Naive thymus-derived CD4-positive, alpha-beta T cell (primary cell): ENCODE measurements at regions of chr17 and their contacts with region 1.

Region 1: GRCh38 chr17:1516388-1517161 is at the start of gene INPP5K:
- DNase-seq: peak; percentile 92 to 99 (median 97)
- ATAC-seq: peak; percentile 98
- H3K4me3 ChIP-seq: peak within 1 kb of the TSS; percentile 84
- H3K4me3 Mint-ChIP-seq: peak within 1 kb of the TSS; percentile 78 to 93 (median 91)
- H3K27ac ChIP-seq: peak within 1 kb of the TSS; percentile 97
- H3K27ac Mint-ChIP-seq: peak within 1 kb of the TSS; percentile 68 to 97 (median 92)
- H3K4me1 ChIP-seq: peaks cover 9 to 14% of the 10 kb centered on the region in 2 donors
- H3K4me1 Mint-ChIP-seq: peaks cover 18 to 47% (median 29%) of the 10 kb centered on the region in 7 donors
- H3K27me3 ChIP-seq: no peaks in the 10 kb centered on the region
- H3K27me3 Mint-ChIP-seq: no peaks in the 10 kb centered on the region
- total RNA-seq, gene INPP5K: 50.5 to 184 (median 84.2) TPM

Region 2: DNA sequence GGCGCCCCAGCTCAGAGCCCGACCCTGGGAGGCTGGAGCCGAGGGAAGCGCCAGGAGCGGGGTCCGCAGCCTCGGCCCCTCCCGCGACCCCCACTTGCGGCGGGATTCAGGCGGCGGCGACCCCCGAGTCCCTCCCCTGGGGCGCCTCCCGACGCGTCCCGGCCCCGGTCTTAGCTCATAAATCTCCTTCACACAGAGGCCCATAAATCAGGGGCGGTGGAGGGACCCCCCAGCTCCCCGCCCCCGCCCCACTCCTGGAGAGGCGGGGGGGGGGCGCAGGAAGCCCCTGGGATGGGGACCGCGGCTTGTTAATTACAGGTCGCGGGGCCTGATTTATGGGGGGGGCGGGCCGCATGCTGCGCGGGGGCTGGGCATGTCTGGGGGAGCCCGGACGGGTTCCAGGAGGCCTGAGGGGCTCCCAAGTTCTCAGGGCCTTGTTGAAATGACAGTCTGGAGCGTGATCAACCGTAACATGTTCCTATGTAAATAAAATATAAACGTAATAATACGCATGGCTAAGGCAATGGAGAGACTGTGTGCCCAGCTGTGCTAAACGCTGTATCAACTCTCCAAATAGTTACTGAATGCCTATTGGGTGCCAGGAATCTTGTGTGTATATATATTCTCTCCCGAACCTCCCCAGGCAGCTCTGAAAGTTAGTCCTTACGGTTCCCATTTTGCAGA is 256.3 kb before region 1 on chr17:
- CTCF ChIA-PET with region 1: no interaction called
- POLR2A ChIA-PET with region 1: no interaction called
- intact Hi-C with region 1: loop called (anchors 1 kb)
- DNase-seq: no peak
- ATAC-seq: no peak
- H3K4me3 ChIP-seq: no peak overlapping the region
- H3K4me3 Mint-ChIP-seq: peak overlapping the region in 9 of 10 donors; percentile 11 to 81 (median 56)
- H3K27ac ChIP-seq: no peak overlapping the region
- H3K27ac Mint-ChIP-seq: no peak overlapping the region
- H3K4me1 ChIP-seq: peaks cover 11 to 14% of the 10 kb centered on the region in 2 donors
- H3K4me1 Mint-ChIP-seq: peaks cover 4 to 32% (median 22%) of the 10 kb centered on the region in 7 donors
- H3K27me3 ChIP-seq: peaks cover 3 to 10% of the 10 kb centered on the region in 2 donors
- H3K27me3 Mint-ChIP-seq: peaks cover 26 to 59% (median 29%) of the 10 kb centered on the region in 5 donors

Region 3: GRCh38 chr17:1365445-1366039 is 151.0 kb before region 1 on chr17:
- CTCF ChIA-PET with region 1: interaction called, 32 read pairs
- POLR2A ChIA-PET with region 1: interaction called, 36 read pairs
- intact Hi-C with region 1: loop called (anchors 1 kb)
- DNase-seq: peak in 8 of 9 donors; percentile 37 to 81 (median 74)
- ATAC-seq: peak; percentile 86
- H3K4me3 ChIP-seq: no peak overlapping the region
- H3K4me3 Mint-ChIP-seq: peak overlapping the region in 7 of 10 donors; percentile 2 to 48 (median 41)
- H3K27ac ChIP-seq: peak overlapping the region; percentile 48
- H3K27ac Mint-ChIP-seq: peak overlapping the region in 6 of 9 donors; percentile 35 to 86 (median 74)
- H3K4me1 ChIP-seq: peaks cover 25 to 27% of the 10 kb centered on the region in 2 donors
- H3K4me1 Mint-ChIP-seq: peaks cover 39 to 83% (median 64%) of the 10 kb centered on the region in 7 donors
- H3K27me3 ChIP-seq: no peaks in the 10 kb centered on the region
- H3K27me3 Mint-ChIP-seq: no peaks in the 10 kb centered on the region

Region 4: GRCh38 chr17:1455797-1456599 is 60.6 kb before region 1 on chr17 and contains the start of gene CRK:
- CTCF ChIA-PET with region 1: interaction called, 3 read pairs
- POLR2A ChIA-PET with region 1: interaction called, 15 read pairs
- intact Hi-C with region 1: loop called (anchors 1 kb)
- DNase-seq: peak; percentile 97 to 100 (median 99)
- ATAC-seq: peak; percentile 97
- H3K4me3 ChIP-seq: peak within 1 kb of the TSS; percentile 94
- H3K4me3 Mint-ChIP-seq: peak within 1 kb of the TSS; percentile 86 to 95 (median 90)
- H3K27ac ChIP-seq: peak within 1 kb of the TSS; percentile 97
- H3K27ac Mint-ChIP-seq: peak within 1 kb of the TSS; percentile 63 to 92 (median 86)
- H3K4me1 ChIP-seq: peaks cover 18 to 37% of the 10 kb centered on the region in 2 donors
- H3K4me1 Mint-ChIP-seq: peaks cover 28 to 64% (median 48%) of the 10 kb centered on the region in 7 donors
- H3K27me3 ChIP-seq: no peaks in the 10 kb centered on the region
- H3K27me3 Mint-ChIP-seq: peaks cover 0 to 23% (median 4%) of the 10 kb centered on the region in 5 donors
- total RNA-seq, gene CRK: 16.9 to 29.0 (median 20.9) TPM

Region 5: GRCh38 chr17:1488030-1488863 is 28.3 kb before region 1 on chr17:
- CTCF ChIA-PET with region 1: interaction called, 3 read pairs
- POLR2A ChIA-PET with region 1: interaction called, 23 read pairs
- intact Hi-C with region 1: loop called (anchors 1 kb)
- DNase-seq: peak; percentile 40 to 83 (median 61)
- ATAC-seq: peak; percentile 61
- H3K4me3 ChIP-seq: peak overlapping the region; percentile 65
- H3K4me3 Mint-ChIP-seq: peak overlapping the region; percentile 82 to 95 (median 88)
- H3K27ac ChIP-seq: peak overlapping the region; percentile 78
- H3K27ac Mint-ChIP-seq: peak overlapping the region; percentile 49 to 92 (median 71)
- H3K4me1 ChIP-seq: peaks cover 21 to 47% of the 10 kb centered on the region in 2 donors
- H3K4me1 Mint-ChIP-seq: peaks cover 0 to 58% (median 44%) of the 10 kb centered on the region in 7 donors
- H3K27me3 ChIP-seq: no peaks in the 10 kb centered on the region
- H3K27me3 Mint-ChIP-seq: peaks cover 0 to 4% (median 0%) of the 10 kb centered on the region in 5 donors

Region 6: DNA sequence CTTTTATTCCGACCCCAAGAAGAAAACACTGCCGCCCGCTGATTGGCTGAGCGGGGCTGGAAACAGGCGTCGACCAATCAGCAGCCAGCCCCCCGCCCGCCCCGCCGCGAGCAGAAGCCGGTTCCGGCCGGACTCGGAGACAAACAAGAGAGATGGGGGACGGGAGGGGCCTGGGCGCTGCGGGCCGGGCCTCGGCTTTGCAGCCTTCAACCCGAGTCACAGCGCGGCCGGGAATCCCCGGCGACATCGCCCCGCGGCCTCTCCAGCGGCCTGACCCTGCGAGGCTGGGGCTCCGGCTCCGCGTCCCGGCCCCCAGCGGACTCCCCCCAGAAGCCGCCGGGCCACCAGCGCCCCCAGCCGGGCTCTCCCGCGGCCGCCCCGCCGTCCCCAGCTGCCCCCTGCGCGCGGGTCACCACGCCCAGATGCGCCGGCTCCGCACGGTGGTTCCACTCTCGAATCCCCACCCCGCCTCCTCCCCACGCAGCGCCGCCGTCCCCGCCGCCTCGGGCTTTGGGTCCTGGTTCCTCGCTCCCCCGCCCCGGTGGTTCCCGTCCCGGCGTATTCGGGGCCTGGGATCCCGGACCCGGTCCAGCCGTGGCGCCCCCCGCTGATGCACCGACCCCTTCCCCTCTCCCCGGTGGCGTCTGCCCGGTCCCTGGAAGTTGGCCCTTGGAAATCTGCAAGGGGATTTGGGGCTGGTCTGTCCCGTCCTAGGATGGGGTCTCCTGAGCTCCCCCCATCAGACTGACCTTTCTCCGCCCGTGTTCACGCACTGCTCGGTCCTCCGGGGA is 112.5 kb after region 1 on chr17:
- CTCF ChIA-PET with region 1: no interaction called
- POLR2A ChIA-PET with region 1: interaction called, 8 read pairs
- intact Hi-C with region 1: loop called (anchors 1 kb)
- DNase-seq: peak; percentile 69 to 89 (median 84)
- ATAC-seq: peak; percentile 84
- H3K4me3 ChIP-seq: peak overlapping the region; percentile 83
- H3K4me3 Mint-ChIP-seq: peak overlapping the region; percentile 92 to 96 (median 94)
- H3K27ac ChIP-seq: peak overlapping the region; percentile 74
- H3K27ac Mint-ChIP-seq: peak overlapping the region; percentile 73 to 95 (median 87)
- H3K4me1 ChIP-seq: peaks cover 5 to 20% of the 10 kb centered on the region in 2 donors
- H3K4me1 Mint-ChIP-seq: peaks cover 17 to 26% (median 22%) of the 10 kb centered on the region in 7 donors
- H3K27me3 ChIP-seq: no peaks in the 10 kb centered on the region
- H3K27me3 Mint-ChIP-seq: peaks cover 0 to 59% (median 0%) of the 10 kb centered on the region in 5 donors

Region 7: DNA sequence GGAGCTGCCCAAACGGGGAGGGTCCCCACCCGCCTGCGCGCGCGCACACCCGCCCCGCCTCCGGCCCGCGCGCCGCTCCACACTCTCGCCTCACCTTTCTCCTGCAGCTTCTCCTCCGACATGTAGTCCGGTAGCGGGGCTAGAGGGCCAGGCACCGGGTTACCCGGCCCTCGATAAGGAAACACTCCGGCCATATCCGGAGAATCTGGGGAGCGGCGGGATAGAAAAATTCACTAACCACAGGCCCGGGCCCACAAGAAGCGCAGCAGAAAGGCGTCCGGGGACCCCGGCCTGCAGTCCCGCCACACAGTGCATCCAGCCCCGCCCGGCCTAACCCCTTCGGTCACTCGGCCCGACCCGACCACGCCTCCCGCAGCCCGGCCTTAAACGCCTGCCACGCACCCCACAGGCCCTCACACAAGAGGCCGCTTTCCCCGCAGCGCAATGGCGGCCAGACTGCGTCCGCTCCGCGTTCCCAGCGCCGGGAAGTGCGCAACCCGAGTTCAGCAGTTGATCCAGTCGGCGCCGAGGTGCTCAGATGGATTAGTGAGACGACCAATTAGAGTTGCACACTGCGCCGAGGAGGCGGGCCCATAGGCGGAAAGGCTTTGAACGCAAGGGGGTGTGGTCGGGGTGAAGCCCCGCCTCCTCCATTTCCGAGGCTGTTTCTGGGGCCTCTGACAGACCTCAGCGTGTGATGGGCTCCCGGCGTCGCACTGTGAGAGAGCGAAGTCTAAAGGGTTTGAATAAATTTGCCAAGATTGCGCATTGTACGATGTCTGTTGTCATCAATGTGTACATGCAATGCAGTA is 168.0 kb after region 1 on chr17 and contains the start of gene PRPF8:
- CTCF ChIA-PET with region 1: no interaction called
- POLR2A ChIA-PET with region 1: interaction called, 3 read pairs
- intact Hi-C with region 1: loop called in 1 of 2 experiments (anchors 1 kb)
- DNase-seq: peak; percentile 89 to 99 (median 99)
- ATAC-seq: peak; percentile 99
- H3K4me3 ChIP-seq: peak within 1 kb of the TSS; percentile 96
- H3K4me3 Mint-ChIP-seq: peak within 1 kb of the TSS; percentile 89 to 100 (median 97)
- H3K27ac ChIP-seq: peak within 1 kb of the TSS; percentile 100
- H3K27ac Mint-ChIP-seq: peak within 1 kb of the TSS; percentile 95 to 100 (median 98)
- H3K4me1 ChIP-seq: peaks cover 10 to 24% of the 10 kb centered on the region in 2 donors
- H3K4me1 Mint-ChIP-seq: peaks cover 32 to 59% (median 48%) of the 10 kb centered on the region in 7 donors
- H3K27me3 ChIP-seq: no peaks in the 10 kb centered on the region
- H3K27me3 Mint-ChIP-seq: no peaks in the 10 kb centered on the region
- total RNA-seq, gene PRPF8: 388 to 554 (median 460) TPM